Activated T-helper 2 cell treated with anti-CD3 and anti-CD28 coated beads, Interferon-gamma antibody, Interleukin-2, Interleukin-4, amounts not matched to agents 10 μg/mL and 5 μg/mL and 100 μg/mL, durations not matched to agents 14 hours and 24 hours and 36 hours (primary cell): ENCODE measurements at regions of chr6 and their contacts with region 1.

Region 1: DNA sequence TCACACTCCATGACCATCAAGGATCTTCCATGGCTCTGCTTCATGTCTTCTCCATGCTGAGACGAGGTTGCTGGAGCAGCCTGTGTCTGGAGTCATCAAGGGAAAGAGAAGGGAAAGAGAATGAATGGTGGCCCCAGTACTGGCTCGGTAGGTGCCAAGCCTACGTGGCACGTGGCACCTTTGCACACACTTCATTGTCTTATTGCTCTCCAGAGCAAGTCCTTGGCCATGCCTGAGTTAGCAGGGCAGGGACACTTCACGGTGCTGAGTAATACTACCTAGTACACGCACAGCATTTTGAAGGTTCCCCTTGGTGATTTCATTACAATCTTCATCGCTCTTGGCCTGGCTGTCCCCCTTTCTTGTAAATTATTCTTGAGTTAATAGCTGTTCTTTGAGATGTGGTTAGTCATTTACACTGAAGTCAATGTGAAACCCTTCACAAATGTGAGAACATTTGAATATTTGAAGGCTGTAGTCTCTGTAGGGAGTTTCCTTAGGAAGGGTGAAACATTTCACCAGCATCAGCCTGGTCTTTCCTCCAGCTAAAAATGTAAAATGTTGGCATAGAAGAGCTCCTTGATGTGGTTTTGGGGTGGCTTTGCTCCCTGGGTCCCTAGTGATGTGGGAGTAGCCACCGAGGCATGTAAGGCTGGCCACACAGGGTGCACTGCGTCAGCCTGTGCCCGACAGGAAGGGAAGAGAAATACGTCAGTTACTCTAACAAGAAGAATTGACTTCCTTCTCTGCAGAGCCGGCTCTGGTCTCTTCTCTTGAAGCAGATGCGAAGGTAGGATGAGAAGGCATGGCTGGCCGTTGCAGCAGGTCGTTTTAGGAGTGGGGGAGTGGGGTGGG is at the start of gene SYTL3:
- DNase-seq: peak; percentile 80
- H3K4me3 Mint-ChIP-seq: peak within 1 kb of the TSS; percentile 90
- H3K27ac Mint-ChIP-seq: peak within 1 kb of the TSS; percentile 92
- H3K4me1 Mint-ChIP-seq: peaks cover 65% of the 10 kb centered on the region
- H3K27me3 Mint-ChIP-seq: no peaks in the 10 kb centered on the region
- total RNA-seq, gene SYTL3: 232 and 242 TPM in 2 replicates

Region 2: DNA sequence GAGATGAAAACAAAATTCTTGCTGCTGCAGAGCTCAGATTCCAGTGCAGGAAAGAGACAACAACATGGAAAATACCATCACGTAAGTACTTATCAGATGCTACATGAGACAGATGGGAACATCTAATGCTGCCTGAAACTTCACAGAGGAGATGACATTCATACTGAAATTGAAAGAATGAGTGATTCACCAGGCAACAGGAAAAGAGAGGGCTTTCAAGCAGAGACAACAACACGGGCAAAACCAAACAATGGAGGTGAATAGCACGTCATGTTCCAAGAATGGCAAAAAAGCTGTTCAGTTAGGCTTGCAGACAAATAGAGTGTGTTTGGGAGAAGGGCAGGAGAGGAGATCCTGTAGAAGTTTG is 442.1 kb before region 1 on chr6:
- intact Hi-C with region 1: loop called (anchors 2 kb)
- DNase-seq: peak; percentile 54
- H3K4me3 Mint-ChIP-seq: peak overlapping the region; percentile 61
- H3K27ac Mint-ChIP-seq: peak overlapping the region; percentile 95
- H3K4me1 Mint-ChIP-seq: peaks cover 35% of the 10 kb centered on the region
- H3K27me3 Mint-ChIP-seq: no peaks in the 10 kb centered on the region

Region 3: DNA sequence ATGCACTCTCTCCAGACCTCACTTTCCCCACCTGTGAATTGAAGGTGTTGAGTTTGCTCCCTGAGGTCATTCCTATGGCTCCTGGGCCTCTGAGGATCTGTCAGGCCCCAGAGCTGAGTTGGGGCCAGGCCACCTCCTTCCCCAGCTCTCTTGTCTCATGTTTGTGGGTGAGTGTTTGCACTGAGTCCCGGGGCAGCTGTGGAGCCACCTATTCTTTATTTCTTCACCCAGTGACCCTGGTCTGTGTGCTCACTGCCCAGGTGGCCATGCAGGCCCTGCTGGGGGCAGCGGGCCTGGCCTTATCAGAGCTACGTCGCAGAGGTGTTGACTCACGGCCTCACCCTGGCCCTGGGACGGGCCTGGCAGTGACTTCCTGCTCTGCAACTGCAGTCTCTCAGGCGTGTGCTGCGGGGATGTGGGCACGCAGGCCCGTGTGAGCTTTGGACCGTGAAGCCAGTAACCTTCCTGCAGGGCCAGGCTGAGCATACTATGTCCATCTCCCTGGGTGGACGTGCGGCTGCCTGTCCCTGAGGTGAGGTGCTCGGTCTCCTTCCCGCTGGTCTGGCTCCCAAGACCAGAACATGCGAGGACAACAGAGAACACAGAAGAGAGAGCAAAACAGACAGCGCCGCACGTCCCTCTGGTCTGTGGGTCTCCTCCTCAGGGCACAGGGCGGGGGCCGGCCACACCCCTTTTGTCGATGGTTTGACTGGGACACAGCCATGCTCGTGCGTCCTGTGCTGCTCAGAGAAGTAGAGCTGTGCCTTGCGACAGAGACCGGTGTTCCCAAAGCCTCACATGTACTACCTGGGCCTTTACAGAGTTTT is 77.5 kb before region 1 on chr6:
- intact Hi-C with region 1: loop called (anchors 1 kb)
- DNase-seq: no peak
- H3K4me3 Mint-ChIP-seq: no peak overlapping the region
- H3K27ac Mint-ChIP-seq: no peak overlapping the region
- H3K4me1 Mint-ChIP-seq: peaks cover 59% of the 10 kb centered on the region
- H3K27me3 Mint-ChIP-seq: no peaks in the 10 kb centered on the region

Region 4: GRCh38 chr6:158686791-158687381 is 37.4 kb after region 1 on chr6:
- intact Hi-C with region 1: loop called (anchors 2 kb)
- DNase-seq: peak; percentile 58
- H3K4me3 Mint-ChIP-seq: peak overlapping the region; percentile 45
- H3K27ac Mint-ChIP-seq: peak overlapping the region; percentile 62
- H3K4me1 Mint-ChIP-seq: peaks cover 58% of the 10 kb centered on the region
- H3K27me3 Mint-ChIP-seq: no peaks in the 10 kb centered on the region

Region 5: GRCh38 chr6:158718461-158719046 is 69.0 kb after region 1 on chr6:
- intact Hi-C with region 1: loop called (anchors 2 kb)
- DNase-seq: no peak
- H3K4me3 Mint-ChIP-seq: no peak overlapping the region
- H3K27ac Mint-ChIP-seq: no peak overlapping the region
- H3K4me1 Mint-ChIP-seq: peaks cover 56% of the 10 kb centered on the region
- H3K27me3 Mint-ChIP-seq: no peaks in the 10 kb centered on the region

Region 6: GRCh38 chr6:158853072-158853871 is 203.8 kb after region 1 on chr6:
- intact Hi-C with region 1: loop called (anchors 1 kb)
- DNase-seq: peak; percentile 86
- H3K4me3 Mint-ChIP-seq: no peak overlapping the region
- H3K27ac Mint-ChIP-seq: no peak overlapping the region
- H3K4me1 Mint-ChIP-seq: peaks cover 29% of the 10 kb centered on the region
- H3K27me3 Mint-ChIP-seq: no peaks in the 10 kb centered on the region

Region 7: GRCh38 chr6:158869826-158870648 is 220.5 kb after region 1 on chr6:
- intact Hi-C with region 1: loop called (anchors 1 kb)
- DNase-seq: peak; percentile 94
- H3K4me3 Mint-ChIP-seq: peak overlapping the region; percentile 83
- H3K27ac Mint-ChIP-seq: peak overlapping the region; percentile 98
- H3K4me1 Mint-ChIP-seq: peaks cover 32% of the 10 kb centered on the region
- H3K27me3 Mint-ChIP-seq: peaks cover 4% of the 10 kb centered on the region

Region 8: GRCh38 chr6:158926416-158926815 is 276.9 kb after region 1 on chr6:
- intact Hi-C with region 1: no loop called
- DNase-seq: no peak
- H3K4me3 Mint-ChIP-seq: no peak overlapping the region
- H3K27ac Mint-ChIP-seq: no peak overlapping the region
- H3K4me1 Mint-ChIP-seq: no peaks in the 10 kb centered on the region
- H3K27me3 Mint-ChIP-seq: peaks cover 3% of the 10 kb centered on the region

Region 9: DNA sequence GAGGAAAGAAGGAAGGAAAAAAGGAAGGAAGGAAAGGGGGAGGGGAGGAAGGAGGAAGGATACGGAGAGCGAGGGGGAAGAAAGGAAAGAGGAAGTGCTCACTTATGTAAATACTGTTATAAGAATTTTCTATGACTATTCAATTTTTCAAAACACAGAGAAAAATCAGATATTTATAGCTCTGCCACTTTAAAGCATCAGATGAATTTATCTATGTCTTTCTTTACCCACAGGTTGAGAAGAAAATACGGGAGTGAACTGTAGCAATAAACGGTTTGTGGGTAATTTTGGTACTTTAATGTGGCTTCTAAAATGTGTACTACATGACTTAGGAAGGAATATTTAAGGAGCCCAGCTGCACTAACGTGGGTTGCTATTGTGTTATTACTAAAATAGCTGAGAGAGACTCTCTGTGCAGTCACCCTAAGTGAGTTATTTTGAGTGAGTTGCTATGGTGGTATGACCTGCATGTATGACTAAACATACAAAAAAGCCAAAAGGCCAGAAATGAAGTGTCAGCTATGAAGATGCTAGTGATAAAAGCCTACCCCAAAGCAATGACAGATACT is 818.0 kb after region 1 on chr6:
- intact Hi-C with region 1: no loop called
- DNase-seq: no peak
- H3K4me3 Mint-ChIP-seq: no peak overlapping the region
- H3K27ac Mint-ChIP-seq: peak overlapping the region; percentile 39
- H3K4me1 Mint-ChIP-seq: peaks cover 4% of the 10 kb centered on the region
- H3K27me3 Mint-ChIP-seq: peaks cover 10% of the 10 kb centered on the region

Region 10: GRCh38 chr6:159926542-159927203 is 1277.2 kb after region 1 on chr6:
- intact Hi-C with region 1: no loop called
- DNase-seq: no peak
- H3K4me3 Mint-ChIP-seq: no peak overlapping the region
- H3K27ac Mint-ChIP-seq: no peak overlapping the region
- H3K4me1 Mint-ChIP-seq: peaks cover 18% of the 10 kb centered on the region
- H3K27me3 Mint-ChIP-seq: peaks cover 20% of the 10 kb centered on the region